ENCODE measurements at regions of chr11 and their contacts with region 1.

Region 1: DNA sequence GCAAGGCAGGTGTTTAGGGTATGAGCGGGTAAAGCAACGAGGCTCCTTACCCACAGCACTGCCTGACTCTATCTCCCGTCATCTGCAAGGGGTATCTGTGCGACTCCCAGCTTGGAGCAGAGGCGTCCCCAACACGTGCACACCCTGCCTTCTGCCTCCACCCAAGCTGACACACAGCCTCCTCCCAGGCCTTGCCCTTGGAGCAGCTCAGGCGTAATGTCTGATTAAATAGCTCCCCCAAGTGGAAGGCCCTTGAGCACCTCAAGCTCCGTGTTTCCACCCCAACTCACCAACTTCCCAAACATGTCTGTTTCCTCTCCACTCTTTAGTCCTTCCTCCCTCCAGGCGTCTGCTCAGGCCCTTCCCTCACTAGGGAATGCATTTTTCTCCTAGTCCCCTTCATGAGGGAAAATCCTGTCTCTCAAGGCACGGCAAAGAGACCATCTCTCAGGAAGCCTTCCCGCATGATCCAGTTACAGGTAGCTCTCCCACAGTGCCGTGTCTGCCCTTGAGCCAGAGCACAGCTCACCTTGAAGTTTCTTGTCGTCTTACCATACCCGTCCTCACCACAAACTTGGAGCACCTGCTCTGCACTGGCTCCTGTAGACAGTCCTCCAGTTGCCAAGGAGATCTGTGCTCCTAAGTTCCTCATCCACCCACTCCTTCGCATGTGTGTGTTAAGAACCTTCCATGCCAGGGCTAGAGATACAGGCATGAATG is 15.8 kb downstream of the CYB5R2 start:
- DNase-seq: peak; percentile 54
- H3K4me3 Mint-ChIP-seq: no peak overlapping the region
- H3K27ac Mint-ChIP-seq: no peak overlapping the region
- H3K4me1 Mint-ChIP-seq: no peaks in the 10 kb centered on the region
- H3K27me3 Mint-ChIP-seq: no peaks in the 10 kb centered on the region

Region 2: DNA sequence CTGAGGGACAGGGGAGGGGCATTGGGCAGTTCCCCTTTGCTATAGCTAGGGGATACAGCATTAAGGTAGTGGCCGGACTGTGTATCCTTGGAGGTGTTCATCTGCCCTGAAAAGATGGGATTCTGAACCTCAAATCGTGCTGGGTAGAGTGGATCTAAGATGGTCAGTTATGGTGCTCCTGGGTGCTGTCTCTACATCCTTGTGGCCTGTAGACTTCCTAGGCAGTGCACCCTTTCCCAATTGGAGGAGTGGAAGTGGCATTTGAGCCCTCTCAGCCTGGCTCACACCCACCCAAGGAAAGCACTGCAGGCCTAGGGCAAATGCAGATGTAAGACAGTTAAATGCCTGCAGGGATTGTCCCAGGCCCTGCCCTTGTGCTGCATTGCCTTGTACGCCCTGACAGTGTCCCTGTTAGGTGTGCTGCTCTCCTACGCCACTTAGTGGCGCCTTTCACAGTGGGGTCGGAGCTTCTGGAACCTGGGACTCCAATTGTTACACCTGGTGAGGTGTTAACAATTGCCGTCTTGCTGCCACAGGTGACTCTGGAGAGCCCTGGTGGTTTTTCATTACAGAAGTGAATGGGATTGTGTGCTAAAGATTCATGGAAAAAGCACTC is 108.7 kb before region 1 on chr11:
- CTCF ChIA-PET with region 1: interaction called, 13 read pairs
- POLR2A ChIA-PET with region 1: no interaction called
- DNase-seq: peak; percentile 49
- H3K4me3 Mint-ChIP-seq: no peak overlapping the region
- H3K27ac Mint-ChIP-seq: no peak overlapping the region
- H3K4me1 Mint-ChIP-seq: peaks cover 5% of the 10 kb centered on the region
- H3K27me3 Mint-ChIP-seq: no peaks in the 10 kb centered on the region

Region 3: GRCh38 chr11:7571640-7572000 is 85.8 kb before region 1 on chr11:
- CTCF ChIA-PET with region 1: interaction called, 16 read pairs
- POLR2A ChIA-PET with region 1: no interaction called
- DNase-seq: peak; percentile 31
- H3K4me3 Mint-ChIP-seq: no peak overlapping the region
- H3K27ac Mint-ChIP-seq: no peak overlapping the region
- H3K4me1 Mint-ChIP-seq: peaks cover 24% of the 10 kb centered on the region
- H3K27me3 Mint-ChIP-seq: peaks cover 13% of the 10 kb centered on the region

Region 4: GRCh38 chr11:7677071-7677470 is 19.6 kb after region 1 on chr11:
- CTCF ChIA-PET with region 1: no interaction called
- POLR2A ChIA-PET with region 1: no interaction called
- DNase-seq: no peak
- H3K4me3 Mint-ChIP-seq: no peak overlapping the region
- H3K27ac Mint-ChIP-seq: no peak overlapping the region
- H3K4me1 Mint-ChIP-seq: peaks cover 6% of the 10 kb centered on the region
- H3K27me3 Mint-ChIP-seq: peaks cover 62% of the 10 kb centered on the region

Measured in activated CD4-positive, alpha-beta memory T cell treated with anti-CD3 and anti-CD28 coated beads, Interleukin-2, amount 10 ng/mL, durations not matched to agents 7 days and 5 days (primary cell).